Aorta (tissue), 5 donors: ENCODE measurements at regions of chr3 and their contacts with region 1.

Region 1: DNA sequence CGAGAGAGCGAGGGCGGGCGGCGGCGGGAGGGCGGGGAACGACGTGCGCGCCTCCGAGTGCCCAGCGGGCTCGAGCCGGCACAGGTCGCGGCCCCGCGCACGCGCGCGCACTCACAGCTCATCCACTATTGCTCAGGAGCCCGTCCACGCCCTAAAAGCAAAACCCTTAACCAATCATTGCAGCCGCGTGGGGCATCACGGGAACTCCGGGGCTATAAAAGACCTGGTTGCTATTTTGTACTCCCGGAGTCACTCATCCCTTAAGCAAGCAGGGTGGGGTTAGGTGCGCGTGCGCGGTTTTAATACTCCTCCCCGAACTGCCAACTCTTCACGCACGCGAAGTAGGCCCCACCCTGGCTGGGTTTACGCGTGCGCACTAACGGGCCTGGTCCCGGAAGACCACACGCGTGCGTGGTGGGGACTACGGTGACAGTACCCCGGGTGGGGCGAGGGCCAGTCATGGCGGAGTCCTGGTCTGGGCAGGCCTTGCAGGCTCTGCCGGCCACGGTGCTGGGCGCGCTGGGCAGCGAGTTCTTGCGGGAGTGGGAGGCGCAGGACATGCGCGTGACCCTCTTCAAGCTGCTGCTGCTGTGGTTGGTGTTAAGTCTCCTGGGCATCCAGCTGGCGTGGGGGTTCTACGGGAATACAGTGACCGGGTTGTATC is at the starts of genes RHOA and TCTA:
- DNase-seq: peak; percentile 100
- ATAC-seq: peak; percentile 97
- H3K4me3 ChIP-seq: peak within 1 kb of the TSS; percentile 68 to 97
- H3K27ac ChIP-seq: peak within 1 kb of the TSS; percentile 87 to 97
- H3K4me1 ChIP-seq: peaks cover 0 to 12% of the 10 kb centered on the region in 2 donors
- H3K27me3 ChIP-seq: no peaks in the 10 kb centered on the region
- total RNA-seq, gene RHOA: 465 to 552 TPM
- total RNA-seq, gene TCTA: 23.8 to 27.2 TPM

Region 2: DNA sequence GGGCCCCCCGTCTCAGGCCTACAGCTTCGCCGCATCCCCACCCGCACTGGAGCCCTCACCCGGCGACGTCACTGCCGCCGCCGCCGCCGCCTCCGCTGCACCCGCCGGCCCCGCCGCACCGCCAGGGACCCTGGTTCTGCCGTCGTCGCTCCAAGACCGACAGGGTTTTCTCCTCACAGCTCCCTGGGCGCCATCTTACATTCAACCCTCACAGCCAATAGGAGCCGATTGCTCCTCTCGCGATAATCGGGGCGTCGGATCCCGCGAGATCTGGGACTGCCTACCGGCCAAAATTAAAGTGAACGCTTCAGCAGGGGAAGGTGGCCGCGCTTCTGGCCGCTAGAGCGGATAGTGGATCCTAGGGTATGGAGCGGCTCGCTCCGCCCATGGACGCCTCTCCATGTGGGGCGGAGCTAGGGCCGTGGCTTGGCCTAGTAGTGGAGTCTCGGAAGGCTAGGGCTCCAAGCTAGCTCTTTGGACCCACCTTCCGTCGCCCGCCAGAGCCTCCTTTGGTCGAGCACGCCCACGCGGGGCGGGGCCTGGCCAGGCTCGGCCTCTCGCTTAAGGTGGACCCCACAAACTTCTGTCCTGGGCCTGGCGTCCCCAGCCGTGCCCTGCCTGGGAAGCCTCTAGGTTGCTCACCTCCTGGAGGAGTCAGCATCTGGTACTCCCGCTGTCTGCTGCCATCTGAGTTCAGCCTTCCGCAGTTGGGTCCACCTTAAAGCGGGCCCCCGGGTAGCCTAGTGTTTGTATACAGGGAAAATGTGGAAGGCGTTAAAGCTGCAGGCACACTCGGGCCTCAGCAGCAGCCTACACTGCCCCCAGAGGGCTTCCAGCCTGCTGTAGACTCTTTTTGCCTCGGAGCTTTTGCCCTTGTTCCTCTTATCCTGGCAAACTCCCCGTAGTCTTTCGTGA is 318.0 kb before region 1 on chr3 and contains the start of gene QRICH1:
- intact Hi-C with region 1: loop called in 1 of 2 experiments (anchors 5 kb)
- DNase-seq: peak; percentile 99
- ATAC-seq: peak; percentile 97
- H3K4me3 ChIP-seq: peak within 1 kb of the TSS; percentile 71 to 88
- H3K27ac ChIP-seq: peak within 1 kb of the TSS; percentile 62 to 77
- H3K4me1 ChIP-seq: no peaks in the 10 kb centered on the region
- H3K27me3 ChIP-seq: no peaks in the 10 kb centered on the region
- total RNA-seq, gene QRICH1: 77.3 to 103 TPM

Region 3: DNA sequence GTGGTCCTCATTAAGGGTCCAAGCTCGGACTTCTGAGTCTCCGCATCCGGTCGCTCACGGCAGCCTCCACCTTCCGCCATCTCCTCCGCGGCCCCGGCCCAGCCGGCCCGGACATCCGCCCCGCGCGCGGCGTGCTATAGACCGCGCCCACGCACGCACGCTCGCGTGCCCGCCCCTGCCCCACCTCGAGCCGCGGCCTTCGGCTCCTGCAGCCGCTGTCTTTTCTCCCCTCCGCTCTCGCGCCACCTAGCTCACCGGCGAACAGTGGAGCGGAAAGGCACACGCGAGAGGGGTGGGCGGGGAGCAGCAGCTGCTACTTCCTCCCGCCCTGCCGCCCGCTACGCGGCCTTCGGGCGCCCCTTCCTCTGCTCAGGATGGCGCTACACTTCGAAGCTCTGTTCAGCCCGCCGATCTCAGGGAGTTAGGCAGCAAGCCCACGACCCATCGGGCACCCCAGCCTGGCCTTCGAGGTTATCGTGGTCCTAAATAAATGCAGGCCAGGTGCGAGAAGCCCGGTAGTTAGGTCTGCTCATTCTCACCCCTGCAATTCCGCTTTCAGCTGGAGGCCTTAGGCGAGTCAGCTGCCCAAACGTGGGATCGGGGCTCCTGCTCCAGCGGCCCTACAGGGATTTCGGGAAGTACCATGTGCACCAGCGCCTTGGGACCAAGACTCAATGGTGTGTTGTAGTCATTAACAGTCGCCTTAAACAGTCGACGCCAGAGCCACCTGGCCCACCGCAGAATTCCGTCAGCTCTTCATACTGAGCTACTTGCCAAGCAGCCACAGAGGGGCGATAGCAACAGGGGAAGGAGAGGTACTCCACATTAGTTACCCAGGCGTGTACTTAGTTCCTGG is 71.9 kb before region 1 on chr3 and contains the start of gene USP4:
- intact Hi-C with region 1: loop called in 1 of 2 experiments (anchors 5 kb)
- DNase-seq: peak; percentile 94 to 96
- ATAC-seq: peak; percentile 97
- H3K4me3 ChIP-seq: peak within 1 kb of the TSS; percentile 78 to 88
- H3K27ac ChIP-seq: peak within 1 kb of the TSS; percentile 63 to 88
- H3K4me1 ChIP-seq: no peaks in the 10 kb centered on the region
- H3K27me3 ChIP-seq: no peaks in the 10 kb centered on the region
- total RNA-seq, gene USP4: 65.0 to 81.5 TPM

Region 4: GRCh38 chr3:49358217-49358883 is 53.8 kb before region 1 on chr3 and contains the start of gene GPX1:
- intact Hi-C with region 1: loop called in 1 of 2 experiments (anchors 5 kb)
- DNase-seq: peak; percentile 98
- ATAC-seq: peak; percentile 97
- H3K4me3 ChIP-seq: peak within 1 kb of the TSS; percentile 39 to 52
- H3K27ac ChIP-seq: peak within 1 kb of the TSS; percentile 64 to 87
- H3K4me1 ChIP-seq: no peaks in the 10 kb centered on the region
- H3K27me3 ChIP-seq: no peaks in the 10 kb centered on the region
- total RNA-seq, gene GPX1: 174 to 209 TPM

Region 5: DNA sequence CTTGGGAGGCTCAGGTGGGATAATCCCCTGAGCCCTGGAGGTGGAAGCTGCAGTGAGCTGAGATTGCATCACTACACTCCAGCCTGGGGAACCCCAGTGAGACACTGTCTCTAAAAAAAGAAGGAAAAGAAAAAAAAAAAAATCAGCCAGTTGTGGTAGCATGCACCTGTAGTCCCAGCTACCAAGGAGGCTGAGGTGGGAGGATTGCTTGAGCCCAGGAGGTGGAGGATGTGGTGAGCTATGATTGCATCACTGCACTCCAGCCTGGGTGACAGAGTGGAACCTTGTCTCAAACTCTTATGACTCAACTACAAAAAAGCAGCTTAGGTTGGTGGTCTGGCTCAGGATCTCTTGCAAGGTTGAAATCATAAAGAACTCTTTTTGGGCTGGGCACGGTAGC is 34.6 kb before region 1 on chr3:
- intact Hi-C with region 1: no loop called
- DNase-seq: no peak
- ATAC-seq: no peak
- H3K4me3 ChIP-seq: no peak overlapping the region
- H3K27ac ChIP-seq: no peak overlapping the region
- H3K4me1 ChIP-seq: no peaks in the 10 kb centered on the region
- H3K27me3 ChIP-seq: no peaks in the 10 kb centered on the region

Region 6: DNA sequence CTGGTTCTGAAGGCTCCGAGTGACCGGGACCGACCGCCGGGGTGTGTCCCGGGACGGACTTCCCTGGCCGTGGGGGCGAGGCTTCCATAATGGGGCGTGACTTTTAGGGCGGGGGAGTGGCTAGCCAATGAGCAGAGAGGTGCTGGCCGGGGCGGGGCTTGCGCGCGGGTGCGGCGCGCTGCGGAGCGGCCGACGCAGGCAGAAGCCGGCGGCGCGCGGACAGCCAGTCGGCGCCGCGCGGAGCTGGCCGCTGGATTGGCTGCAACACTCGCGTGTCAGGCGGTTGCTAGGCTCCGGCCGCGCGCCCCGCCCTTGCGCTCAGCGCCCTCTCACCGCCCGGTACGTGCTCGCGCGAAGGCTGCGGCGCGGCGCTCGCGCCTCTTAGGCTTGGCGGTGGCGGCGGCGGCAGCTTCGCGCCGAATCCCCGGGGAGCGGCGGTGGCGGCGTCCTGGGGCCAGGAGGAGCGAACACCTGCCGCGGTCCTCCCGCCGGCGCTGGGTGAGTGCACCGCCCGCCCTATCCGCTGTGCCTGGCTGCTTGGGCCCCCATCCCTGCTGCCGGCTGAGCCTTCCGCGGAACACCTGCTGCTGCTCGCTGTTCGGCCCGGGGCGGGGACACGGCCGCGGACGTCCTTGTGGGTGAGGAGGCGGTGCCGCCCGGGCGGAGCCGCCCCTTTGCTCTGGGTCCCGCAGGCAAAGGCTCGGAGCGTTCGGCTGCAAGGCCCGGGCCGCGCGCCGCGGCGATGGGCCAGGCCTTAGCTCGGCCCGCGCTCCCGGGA is 58.0 kb after region 1 on chr3 and contains the start of gene DAG1:
- intact Hi-C with region 1: loop called in 1 of 2 experiments (anchors 2 kb)
- DNase-seq: peak; percentile 98 to 99
- ATAC-seq: peak; percentile 96
- H3K4me3 ChIP-seq: peak within 1 kb of the TSS; percentile 69 to 84
- H3K27ac ChIP-seq: peak within 1 kb of the TSS; percentile 88 to 96
- H3K4me1 ChIP-seq: no peaks in the 10 kb centered on the region
- H3K27me3 ChIP-seq: no peaks in the 10 kb centered on the region
- total RNA-seq, gene DAG1: 70.3 to 87.4 TPM